Activated CD4-positive, alpha-beta memory T cell treated with anti-CD3 and anti-CD28 coated beads for 36 hours (primary cell): ENCODE measurements at regions of chr6 and their contacts with region 1.

Region 1: GRCh38 chr6:107064579-107065065 is 36.6 kb downstream of the MTRES1 start:
- DNase-seq: peak; percentile 65
- H3K4me3 Mint-ChIP-seq: no peak overlapping the region
- H3K27ac Mint-ChIP-seq: peak overlapping the region; percentile 38
- H3K4me1 Mint-ChIP-seq: peaks cover 46% of the 10 kb centered on the region
- H3K27me3 Mint-ChIP-seq: no peaks in the 10 kb centered on the region

Region 2: DNA sequence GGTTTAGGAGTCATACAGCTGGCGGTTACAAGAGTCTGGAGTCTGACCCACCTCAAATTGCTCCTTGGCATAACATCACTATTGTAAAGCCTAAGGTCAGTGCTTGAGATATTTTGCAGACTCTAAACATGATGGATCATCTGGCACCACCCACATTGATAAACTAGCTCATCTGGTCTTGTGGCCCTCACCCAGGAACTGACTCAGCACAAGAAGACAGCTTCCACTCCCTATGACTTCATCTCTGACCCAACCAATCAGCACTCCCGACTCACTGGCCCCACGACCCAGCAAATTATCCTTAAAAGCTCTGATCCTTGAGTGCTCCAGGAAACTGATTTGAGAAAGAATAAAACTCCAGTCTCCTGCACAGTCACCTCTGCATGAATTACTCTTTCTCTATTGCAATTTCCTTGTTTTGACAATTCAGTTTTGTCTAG is 205.9 kb before region 1 on chr6:
- CTCF ChIA-PET with region 1: no interaction called
- POLR2A ChIA-PET with region 1: no interaction called
- intact Hi-C with region 1: no loop called
- DNase-seq: no peak
- H3K4me3 Mint-ChIP-seq: no peak overlapping the region
- H3K27ac Mint-ChIP-seq: no peak overlapping the region
- H3K4me1 Mint-ChIP-seq: no peaks in the 10 kb centered on the region
- H3K27me3 Mint-ChIP-seq: peaks cover 5% of the 10 kb centered on the region

Region 3: GRCh38 chr6:107033126-107033525 is 31.5 kb before region 1 on chr6:
- CTCF ChIA-PET with region 1: no interaction called
- POLR2A ChIA-PET with region 1: no interaction called
- intact Hi-C with region 1: loop called (anchors 1 kb)
- DNase-seq: no peak
- H3K4me3 Mint-ChIP-seq: no peak overlapping the region
- H3K27ac Mint-ChIP-seq: peak overlapping the region; percentile 20
- H3K4me1 Mint-ChIP-seq: peaks cover 34% of the 10 kb centered on the region
- H3K27me3 Mint-ChIP-seq: no peaks in the 10 kb centered on the region